Activated CD4-positive, alpha-beta memory T cell treated with anti-CD3 and anti-CD28 coated beads for 36 hours (primary cell): ENCODE measurements at regions of chr12 and their contacts with region 1.

Region 1: GRCh38 chr12:68958322-68958721 is 25.4 kb upstream of the CPM start:
- DNase-seq: peak; percentile 68
- H3K4me3 Mint-ChIP-seq: peak overlapping the region; percentile 1
- H3K27ac Mint-ChIP-seq: peak overlapping the region; percentile 87
- H3K4me1 Mint-ChIP-seq: peaks cover 43% of the 10 kb centered on the region
- H3K27me3 Mint-ChIP-seq: no peaks in the 10 kb centered on the region

Region 2: DNA sequence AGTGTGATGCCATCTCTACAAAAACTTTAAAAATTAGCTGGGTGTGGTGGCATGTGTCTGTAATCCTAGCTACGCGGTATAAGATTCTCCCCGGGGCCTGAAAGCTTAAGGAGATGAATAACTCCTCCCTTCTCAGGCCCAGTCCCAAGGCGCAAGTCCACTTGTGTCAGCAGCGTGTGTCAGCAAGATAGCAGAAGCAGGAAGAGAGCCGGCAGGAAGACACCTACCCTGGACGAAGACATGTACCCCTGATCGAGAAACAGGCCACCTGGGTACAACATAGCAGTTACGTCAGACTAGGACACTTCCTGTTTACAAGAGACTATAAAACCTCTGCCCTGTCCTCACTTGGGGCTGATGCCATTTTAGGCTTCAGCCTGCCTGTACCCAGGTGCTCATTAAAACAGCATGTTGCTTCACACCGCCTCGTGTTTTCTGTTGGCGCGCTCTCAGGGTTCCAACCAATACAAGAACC is 68.6 kb before region 1 on chr12:
- CTCF ChIA-PET with region 1: no interaction called
- POLR2A ChIA-PET with region 1: no interaction called
- intact Hi-C with region 1: loop called (anchors 2 kb)
- DNase-seq: no peak
- H3K4me3 Mint-ChIP-seq: no peak overlapping the region
- H3K27ac Mint-ChIP-seq: no peak overlapping the region
- H3K4me1 Mint-ChIP-seq: peaks cover 29% of the 10 kb centered on the region
- H3K27me3 Mint-ChIP-seq: peaks cover 1% of the 10 kb centered on the region

Region 3: DNA sequence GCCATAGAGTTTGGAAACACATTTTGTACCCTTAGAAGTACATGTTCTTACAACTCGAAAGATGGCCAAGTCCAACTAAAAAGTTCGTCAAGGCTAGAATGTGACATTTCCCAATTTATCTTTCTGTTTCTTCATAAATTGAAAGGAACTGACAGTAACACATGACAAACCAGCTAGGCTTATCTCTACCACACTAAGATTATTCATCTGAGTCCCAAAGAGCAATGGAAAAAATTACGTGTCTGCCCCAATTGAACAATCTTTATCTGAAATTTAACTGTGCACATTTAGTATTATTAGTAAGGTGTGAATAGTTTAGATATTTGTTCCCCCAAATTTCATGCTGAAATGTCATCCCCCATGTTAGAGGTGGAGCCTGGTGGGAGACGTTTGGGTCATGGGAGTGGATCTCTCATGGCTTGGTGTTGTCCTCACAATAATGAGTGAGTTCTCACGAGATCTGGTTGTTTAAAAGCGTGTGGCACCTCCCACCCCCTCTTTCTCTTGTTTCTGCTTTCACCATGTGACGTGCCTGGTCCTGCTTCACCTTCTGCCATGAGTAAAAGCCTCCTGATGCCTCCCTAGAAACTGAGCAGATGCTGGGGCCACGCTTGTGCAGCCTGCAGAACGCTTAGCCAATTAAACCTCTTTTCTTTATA is 38.6 kb before region 1 on chr12:
- CTCF ChIA-PET with region 1: interaction called, 3 read pairs
- POLR2A ChIA-PET with region 1: no interaction called
- intact Hi-C with region 1: loop called (anchors 1 kb)
- DNase-seq: peak; percentile 60
- H3K4me3 Mint-ChIP-seq: no peak overlapping the region
- H3K27ac Mint-ChIP-seq: no peak overlapping the region
- H3K4me1 Mint-ChIP-seq: peaks cover 9% of the 10 kb centered on the region
- H3K27me3 Mint-ChIP-seq: no peaks in the 10 kb centered on the region

Region 4: DNA sequence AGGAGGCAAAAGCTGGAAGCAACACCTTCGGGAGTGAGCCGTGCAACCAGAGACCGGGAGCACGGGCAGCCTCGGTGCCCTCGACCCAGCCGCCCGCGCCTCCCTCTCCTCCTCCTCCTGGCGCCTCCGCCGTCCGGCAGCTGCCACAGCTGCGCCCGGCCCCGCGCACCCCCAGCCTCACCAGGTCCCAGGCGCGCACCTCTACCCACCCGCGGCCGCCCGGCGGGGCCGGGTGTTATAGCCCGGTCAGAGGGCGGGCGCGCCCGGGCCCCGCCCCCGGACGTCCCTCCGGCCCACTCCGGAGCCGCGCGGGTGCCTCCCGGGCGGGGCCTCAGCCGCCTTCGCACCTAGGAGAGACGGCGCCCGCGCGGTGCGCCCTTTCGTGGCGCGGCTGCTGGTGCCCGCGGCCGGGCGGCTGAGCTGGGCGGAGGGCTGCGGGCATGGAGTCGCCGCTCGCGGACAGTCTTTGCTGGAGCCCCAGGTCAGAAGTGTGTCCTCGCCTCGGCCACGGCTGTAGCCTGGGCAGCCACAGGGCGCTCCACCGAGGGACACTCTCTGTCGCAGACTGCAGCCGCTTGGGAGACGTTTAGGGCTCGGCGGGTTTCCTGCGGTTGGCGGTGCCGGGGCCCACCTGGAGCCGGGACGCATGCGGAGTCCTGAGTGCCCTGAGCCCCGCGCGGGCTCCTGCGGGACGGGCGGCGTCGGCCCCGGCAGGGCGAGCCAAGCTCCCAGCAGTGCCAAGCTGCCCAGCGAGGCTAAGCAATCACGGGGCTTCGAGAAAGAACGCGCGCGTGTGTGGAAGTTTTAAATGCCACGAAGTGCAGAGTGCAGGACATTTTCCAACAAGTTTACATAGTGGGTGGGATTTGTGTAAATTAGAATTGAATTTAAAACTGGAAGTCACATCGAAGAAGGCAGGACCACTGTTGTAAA is 25.1 kb before region 1 on chr12 and contains the start of gene CPM:
- CTCF ChIA-PET with region 1: no interaction called
- POLR2A ChIA-PET with region 1: interaction called, 5 read pairs
- intact Hi-C with region 1: loop called (anchors 1 kb)
- DNase-seq: peak; percentile 81
- H3K4me3 Mint-ChIP-seq: peak within 1 kb of the TSS; percentile 82
- H3K27ac Mint-ChIP-seq: peak within 1 kb of the TSS; percentile 43
- H3K4me1 Mint-ChIP-seq: peaks cover 17% of the 10 kb centered on the region
- H3K27me3 Mint-ChIP-seq: peaks cover 17% of the 10 kb centered on the region
- total RNA-seq, gene CPM: 14.7 to 19.8 TPM

Region 5: GRCh38 chr12:69059483-69060457 is 101.4 kb after region 1 on chr12:
- CTCF ChIA-PET with region 1: no interaction called
- POLR2A ChIA-PET with region 1: no interaction called
- intact Hi-C with region 1: loop called (anchors 1 kb)
- DNase-seq: peak; percentile 35
- H3K4me3 Mint-ChIP-seq: no peak overlapping the region
- H3K27ac Mint-ChIP-seq: peak overlapping the region; percentile 70
- H3K4me1 Mint-ChIP-seq: peaks cover 33% of the 10 kb centered on the region
- H3K27me3 Mint-ChIP-seq: no peaks in the 10 kb centered on the region